Motor neuron (in vitro differentiated cells): ENCODE measurements at regions of chr19 and their contacts with region 1.

Region 1: GRCh38 chr19:662962-663681 is at the start of gene RNF126:
- ATAC-seq: peak; percentile 37 to 84 (median 78)
- H3K4me3 ChIP-seq: peak within 1 kb of the TSS; percentile 66 to 97 (median 90)
- H3K27ac ChIP-seq: peak within 1 kb of the TSS; percentile 85 to 91
- H3K4me1 ChIP-seq: peaks cover 21 to 31% of the 10 kb centered on the region in 2 donors
- total RNA-seq, gene RNF126: 9.3 to 54.5 (median 22.7) TPM

Region 2: DNA sequence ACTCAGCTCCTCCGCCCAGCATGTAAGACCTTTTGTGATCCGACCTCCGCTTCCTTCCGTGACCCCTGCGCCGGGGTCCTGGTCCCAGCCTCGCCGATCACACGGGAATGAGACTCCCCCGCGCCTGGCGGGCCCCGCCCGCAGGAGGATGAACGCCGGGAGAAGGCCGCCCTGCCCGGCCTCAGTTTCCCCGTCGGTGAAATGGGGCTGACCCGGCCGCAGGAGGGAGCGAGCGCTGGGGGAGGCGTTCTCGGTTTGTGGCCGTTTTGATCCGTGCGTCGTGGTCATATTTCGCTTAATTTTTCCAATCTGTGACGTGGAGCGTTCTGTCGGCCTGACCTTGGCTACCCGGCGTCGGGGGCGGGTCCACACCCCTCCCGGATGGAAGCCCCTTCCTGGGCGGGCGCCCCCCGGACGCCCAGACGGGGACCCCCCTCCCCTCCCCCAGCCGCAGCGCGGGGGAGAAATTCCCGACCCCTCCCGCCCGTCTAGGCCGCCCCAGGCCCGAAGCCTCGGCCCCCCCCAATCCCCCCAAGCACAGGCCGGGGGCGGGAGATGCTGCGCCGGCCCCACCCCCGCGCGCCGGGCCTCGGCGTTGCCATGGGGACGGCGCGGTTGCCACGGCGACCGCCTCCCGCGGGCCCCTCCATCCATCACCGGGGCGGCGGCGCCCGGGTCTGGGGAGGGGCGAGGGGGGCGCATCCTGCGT is 56.7 kb after region 1 on chr19:
- in situ Hi-C with region 1: loop called in 1 of 9 experiments (anchors 10 kb)
- ATAC-seq: peak in 6 of 8 experiments; percentile 17 to 74 (median 64)
- H3K4me3 ChIP-seq: peak overlapping the region; percentile 22 to 47 (median 35)
- H3K27ac ChIP-seq: peak overlapping the region; percentile 90 to 94
- H3K4me1 ChIP-seq: peaks cover 31 to 48% of the 10 kb centered on the region in 2 donors

Region 3: DNA sequence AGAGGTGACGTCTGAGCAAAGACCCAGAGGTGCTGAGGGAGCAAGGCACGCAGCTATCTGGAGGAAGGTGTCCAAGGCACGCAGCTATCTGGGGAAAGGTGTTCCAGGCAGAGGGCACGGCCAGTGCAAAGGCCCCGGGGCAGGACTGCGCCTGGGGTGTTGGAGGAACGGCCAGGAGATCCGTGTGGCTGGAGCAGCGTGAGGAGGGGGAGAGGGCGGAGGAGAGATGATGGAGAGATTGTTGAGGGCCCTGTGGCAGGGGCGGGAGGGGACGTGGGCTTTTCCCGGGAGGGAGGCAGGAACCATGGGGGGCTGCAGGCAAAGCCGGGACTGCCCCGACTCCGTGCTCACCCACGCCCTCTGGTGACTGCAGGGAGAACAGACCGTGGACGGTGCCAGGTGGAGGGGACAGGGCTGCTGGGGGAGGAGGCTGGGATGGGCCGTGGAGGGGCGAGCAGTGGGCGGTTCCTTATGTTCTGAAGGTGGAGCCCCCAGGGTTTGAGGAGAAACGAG is 74.5 kb after region 1 on chr19:
- in situ Hi-C with region 1: loop called in 3 of 9 experiments (anchors 10 kb)
- ATAC-seq: peak in 4 of 8 experiments; percentile 9 to 84 (median 25)
- H3K4me3 ChIP-seq: no peak overlapping the region
- H3K27ac ChIP-seq: no peak overlapping the region
- H3K4me1 ChIP-seq: no peaks in the 10 kb centered on the region

Region 4: GRCh38 chr19:771332-771785 is 108.2 kb after region 1 on chr19:
- in situ Hi-C with region 1: loop called in 1 of 9 experiments (anchors 25 kb)
- ATAC-seq: peak in 4 of 8 experiments; percentile 33 to 79 (median 72)
- H3K4me3 ChIP-seq: no peak overlapping the region
- H3K27ac ChIP-seq: no peak overlapping the region
- H3K4me1 ChIP-seq: peaks cover 0 to 3% of the 10 kb centered on the region in 2 donors

Region 5: GRCh38 chr19:913080-913748 is 250.1 kb after region 1 on chr19 and contains the start of gene R3HDM4:
- in situ Hi-C with region 1: loop called in 1 of 9 experiments (anchors 25 kb)
- ATAC-seq: peak; percentile 31 to 92 (median 58)
- H3K4me3 ChIP-seq: peak within 1 kb of the TSS; percentile 56 to 98 (median 92)
- H3K27ac ChIP-seq: peak within 1 kb of the TSS; percentile 66 to 68
- H3K4me1 ChIP-seq: peaks cover 6 to 13% of the 10 kb centered on the region in 2 donors
- total RNA-seq, gene R3HDM4: 25.7 to 35.6 (median 30.1) TPM